Heart right ventricle (tissue), 16 donors: ENCODE measurements at regions of chr1 and their contacts with region 1.

Region 1: GRCh38 chr1:110495926-110496600 is 22.9 kb downstream of the KCNA10 start:
- DNase-seq: peak; percentile 49 to 77
- ATAC-seq: peak; percentile 75 to 92 (median 82)
- H3K4me3 ChIP-seq: no peak overlapping the region
- H3K27ac ChIP-seq: no peak overlapping the region
- H3K4me1 ChIP-seq: no peaks in the 10 kb centered on the region
- H3K27me3 ChIP-seq: no peaks in the 10 kb centered on the region
- CTCF ChIP-seq: peak; percentile 73 to 95 (median 89)

Region 2: DNA sequence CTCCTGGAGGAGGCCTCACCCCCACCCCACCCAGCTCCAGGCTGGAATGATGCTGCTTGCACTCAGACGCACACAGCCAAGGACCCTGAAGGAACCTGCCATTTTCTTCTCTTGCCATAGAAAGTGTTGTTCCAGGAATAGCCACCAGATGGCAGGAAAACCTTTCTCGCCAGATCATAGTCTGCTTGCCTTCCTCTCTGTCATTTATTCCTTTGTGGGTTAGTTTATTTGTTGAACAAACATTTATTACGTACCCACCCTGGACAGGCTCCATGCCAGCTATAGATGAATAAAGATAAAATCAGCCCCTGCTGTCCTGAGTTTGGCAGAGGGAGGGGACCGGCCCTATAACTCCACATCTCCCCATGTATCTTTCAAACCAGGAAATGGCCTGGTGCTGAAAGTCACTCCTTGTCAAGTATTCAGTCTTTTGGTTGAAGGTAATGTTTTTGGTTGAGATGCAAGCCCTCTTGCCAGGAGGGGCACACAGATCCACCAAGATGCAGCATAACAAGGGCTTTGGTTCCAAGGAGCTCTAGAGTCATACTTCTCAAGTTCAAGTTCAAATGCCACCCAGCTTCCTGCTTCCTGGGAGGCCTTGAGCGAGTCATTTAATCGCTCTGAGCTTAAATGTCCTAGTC is 292.9 kb before region 1 on chr1:
- intact Hi-C with region 1: loop called in 8 of 10 experiments (anchors 5 to 10 kb)
- DNase-seq: peak in 1 of 2 donors; percentile 67
- ATAC-seq: peak in 7 of 8 donors; percentile 31 to 73 (median 42)
- H3K4me3 ChIP-seq: no peak overlapping the region
- H3K27ac ChIP-seq: no peak overlapping the region
- H3K4me1 ChIP-seq: peaks cover 0 to 9% (median 4%) of the 10 kb centered on the region in 9 donors
- H3K27me3 ChIP-seq: no peaks in the 10 kb centered on the region
- CTCF ChIP-seq: peak; percentile 81 to 92 (median 89)

Region 3: DNA sequence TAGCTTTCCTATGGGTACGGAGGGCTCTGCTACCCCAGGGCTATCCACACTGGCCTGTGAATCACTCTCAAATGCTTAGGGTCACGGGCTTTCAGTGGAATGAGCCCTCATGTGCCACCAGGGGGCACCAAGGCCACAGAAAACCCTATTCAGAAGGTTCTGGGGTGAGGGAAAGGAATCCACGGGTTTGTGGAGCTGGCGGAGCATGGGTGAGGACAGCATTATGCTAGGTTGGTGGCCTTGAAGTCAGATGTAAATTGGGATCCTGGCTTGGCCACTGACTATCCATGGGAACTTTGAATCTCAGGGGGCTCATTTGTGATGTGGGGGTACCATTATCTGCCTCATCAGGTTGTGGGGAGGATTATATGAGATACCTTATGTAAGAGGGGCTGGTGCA is 83.5 kb before region 1 on chr1:
- intact Hi-C with region 1: loop called in 2 of 10 experiments (anchors 2 to 5 kb)
- DNase-seq: peak; percentile 58 to 65
- ATAC-seq: peak; percentile 34 to 77 (median 44)
- H3K4me3 ChIP-seq: no peak overlapping the region
- H3K27ac ChIP-seq: no peak overlapping the region
- H3K4me1 ChIP-seq: peaks cover 9 to 32% (median 19%) of the 10 kb centered on the region in 9 donors
- H3K27me3 ChIP-seq: no peaks in the 10 kb centered on the region
- CTCF ChIP-seq: peak; percentile 62 to 83 (median 78)